ENCODE measurements at regions of chr19 and their contacts with region 1.

Region 1: DNA sequence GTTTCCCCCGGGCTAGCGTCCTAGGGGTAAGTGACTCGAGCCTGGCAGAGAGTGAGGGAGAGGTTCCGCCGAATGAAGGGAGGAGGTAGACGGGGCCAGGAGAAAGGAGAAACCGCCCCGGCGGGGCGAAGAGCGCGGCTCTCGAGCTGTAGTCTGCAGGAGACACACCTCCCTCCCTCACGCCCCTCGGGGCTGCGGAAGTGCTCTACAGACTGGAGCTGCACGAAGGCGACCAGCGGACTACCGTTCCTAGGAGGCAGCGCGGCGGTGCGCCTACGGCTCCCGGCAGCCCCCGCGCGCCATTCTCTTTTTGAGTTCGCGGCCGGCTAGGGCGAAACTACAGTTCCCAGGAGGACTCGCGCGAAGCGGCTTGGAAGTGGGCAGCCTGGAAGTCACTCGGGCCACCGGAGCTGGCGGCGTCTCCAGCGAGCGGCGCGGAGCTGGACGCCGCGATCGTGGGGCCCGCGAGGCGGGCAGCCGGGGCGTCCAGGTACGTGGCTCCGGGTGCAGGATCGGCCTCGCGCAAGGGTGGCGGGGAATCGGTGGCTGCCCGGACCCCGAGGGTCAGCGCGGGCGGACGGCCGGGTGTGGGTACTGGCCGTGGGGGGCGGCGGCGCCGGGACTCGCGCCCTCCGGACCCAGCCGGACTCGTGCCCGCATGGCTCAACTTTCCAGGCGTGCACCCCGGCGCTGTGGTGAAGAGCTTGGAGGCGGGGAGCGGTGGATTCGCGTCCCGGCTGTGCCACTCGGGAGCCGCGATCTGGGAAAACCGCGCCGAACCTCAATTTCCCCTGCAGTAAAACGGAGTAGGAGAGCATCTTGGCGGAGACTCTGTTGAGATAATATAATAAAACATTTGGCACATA is at the start of gene SIPA1L3:
- DNase-seq: peak; percentile 94
- ATAC-seq: peak; percentile 98 to 100 (median 99)
- H3K4me3 ChIP-seq: peak within 1 kb of the TSS; percentile 63 to 99 (median 88)
- H3K27ac ChIP-seq: peak within 1 kb of the TSS in 9 of 10 donors; percentile 64 to 88 (median 78)
- H3K4me1 ChIP-seq: peaks cover 4 to 24% (median 18%) of the 10 kb centered on the region in 9 donors
- H3K27me3 ChIP-seq: no peaks in the 10 kb centered on the region
- CTCF ChIP-seq: peak in 2 of 9 donors; percentile 9 to 16
- total RNA-seq, gene SIPA1L3: 5.2 to 24.2 (median 12.7) TPM

Region 2: GRCh38 chr19:38004521-38005223 is 97.6 kb after region 1 on chr19:
- intact Hi-C with region 1: loop called in 4 of 10 experiments (anchors 5 to 10 kb)
- DNase-seq: peak; percentile 64 to 90
- ATAC-seq: peak; percentile 95 to 98 (median 96)
- H3K4me3 ChIP-seq: peak overlapping the region; percentile 12 to 55 (median 46)
- H3K27ac ChIP-seq: peak overlapping the region; percentile 51 to 92 (median 81)
- H3K4me1 ChIP-seq: peaks cover 9 to 40% (median 29%) of the 10 kb centered on the region in 9 donors
- H3K27me3 ChIP-seq: no peaks in the 10 kb centered on the region
- CTCF ChIP-seq: no peak

Region 3: GRCh38 chr19:38013913-38014575 is 106.9 kb after region 1 on chr19:
- intact Hi-C with region 1: loop called in 3 of 10 experiments (anchors 10 kb)
- DNase-seq: no peak
- ATAC-seq: no peak
- H3K4me3 ChIP-seq: no peak overlapping the region
- H3K27ac ChIP-seq: no peak overlapping the region
- H3K4me1 ChIP-seq: no peaks in the 10 kb centered on the region
- H3K27me3 ChIP-seq: no peaks in the 10 kb centered on the region
- CTCF ChIP-seq: no peak

Region 4: GRCh38 chr19:38095411-38096308 is 188.6 kb after region 1 on chr19:
- intact Hi-C with region 1: loop called in 8 of 10 experiments (anchors 2 to 10 kb)
- DNase-seq: peak; percentile 59 to 68
- ATAC-seq: peak in 6 of 8 donors; percentile 50 to 76 (median 62)
- H3K4me3 ChIP-seq: no peak overlapping the region
- H3K27ac ChIP-seq: no peak overlapping the region
- H3K4me1 ChIP-seq: peaks cover 0 to 17% (median 0%) of the 10 kb centered on the region in 9 donors
- H3K27me3 ChIP-seq: no peaks in the 10 kb centered on the region
- CTCF ChIP-seq: peak; percentile 45 to 80 (median 71)

Region 5: GRCh38 chr19:38107129-38107528 is 200.0 kb after region 1 on chr19:
- intact Hi-C with region 1: no loop called
- DNase-seq: no peak
- ATAC-seq: no peak
- H3K4me3 ChIP-seq: no peak overlapping the region
- H3K27ac ChIP-seq: no peak overlapping the region
- H3K4me1 ChIP-seq: no peaks in the 10 kb centered on the region
- H3K27me3 ChIP-seq: no peaks in the 10 kb centered on the region
- CTCF ChIP-seq: no peak

Region 6: DNA sequence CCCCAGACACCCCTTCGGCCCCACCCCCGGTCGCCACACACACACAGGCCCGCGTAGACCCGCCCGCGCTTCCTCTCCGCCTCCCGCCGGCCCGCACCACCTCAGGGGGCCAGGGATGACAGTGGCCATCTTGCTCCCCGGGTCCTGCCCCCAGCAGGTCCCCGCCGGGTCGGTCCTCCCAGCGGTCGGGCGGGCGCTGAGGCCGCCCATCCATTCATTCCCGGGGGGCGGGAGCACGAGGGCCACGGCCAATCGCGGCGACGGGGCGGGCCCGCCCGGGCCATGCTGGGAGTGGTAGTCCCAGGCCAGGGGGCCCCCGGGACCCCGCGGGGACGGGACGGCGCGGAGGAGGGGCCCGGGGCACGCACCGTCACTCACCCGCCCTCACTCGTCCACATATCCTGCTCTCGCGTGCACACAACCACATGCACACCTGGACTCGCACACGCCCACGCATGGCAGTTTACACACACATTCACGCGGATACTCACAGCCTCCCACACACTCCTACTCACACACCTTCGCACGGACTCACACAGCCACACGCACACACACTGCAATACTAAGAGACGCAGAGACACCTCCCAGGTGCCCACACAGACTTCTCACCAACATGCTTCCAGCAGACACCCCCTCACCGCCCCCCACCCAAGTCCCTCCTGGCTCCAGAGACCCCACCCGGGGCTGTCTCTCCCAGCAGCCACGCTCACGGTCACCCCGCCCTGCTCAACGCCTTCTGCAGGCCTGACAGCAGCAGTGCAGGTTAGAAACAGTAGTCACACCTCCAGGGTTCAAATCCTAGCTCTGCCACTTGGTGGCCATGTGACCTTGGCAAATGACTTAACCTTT is 317.1 kb after region 1 on chr19 and contains the start of gene DPF1:
- intact Hi-C with region 1: loop called in 4 of 10 experiments (anchors 5 to 10 kb)
- DNase-seq: peak; percentile 35 to 50
- ATAC-seq: peak; percentile 48 to 84 (median 74)
- H3K4me3 ChIP-seq: peak within 1 kb of the TSS in 9 of 10 donors; percentile 29 to 55 (median 50)
- H3K27ac ChIP-seq: no peak within 1 kb of the TSS
- H3K4me1 ChIP-seq: peaks cover 3 to 27% (median 22%) of the 10 kb centered on the region in 9 donors
- H3K27me3 ChIP-seq: peaks cover 13 to 86% (median 81%) of the 10 kb centered on the region in 7 donors
- CTCF ChIP-seq: no peak
- total RNA-seq, gene DPF1: 0.16 to 0.72 (median 0.30) TPM in 6 of 10 donors, not detected in the others

Region 7: GRCh38 chr19:38229585-38230073 is 322.5 kb after region 1 on chr19:
- intact Hi-C with region 1: loop called in 6 of 10 experiments (anchors 5 to 10 kb)
- DNase-seq: peak; percentile 52 to 68
- ATAC-seq: peak; percentile 85 to 92 (median 86)
- H3K4me3 ChIP-seq: peak overlapping the region in 7 of 10 donors; percentile 21 to 42 (median 37)
- H3K27ac ChIP-seq: no peak overlapping the region
- H3K4me1 ChIP-seq: peaks cover 3 to 17% (median 13%) of the 10 kb centered on the region in 9 donors
- H3K27me3 ChIP-seq: peaks cover 0 to 79% (median 57%) of the 10 kb centered on the region in 7 donors
- CTCF ChIP-seq: peak in 1 of 9 donors; percentile 4

Region 8: DNA sequence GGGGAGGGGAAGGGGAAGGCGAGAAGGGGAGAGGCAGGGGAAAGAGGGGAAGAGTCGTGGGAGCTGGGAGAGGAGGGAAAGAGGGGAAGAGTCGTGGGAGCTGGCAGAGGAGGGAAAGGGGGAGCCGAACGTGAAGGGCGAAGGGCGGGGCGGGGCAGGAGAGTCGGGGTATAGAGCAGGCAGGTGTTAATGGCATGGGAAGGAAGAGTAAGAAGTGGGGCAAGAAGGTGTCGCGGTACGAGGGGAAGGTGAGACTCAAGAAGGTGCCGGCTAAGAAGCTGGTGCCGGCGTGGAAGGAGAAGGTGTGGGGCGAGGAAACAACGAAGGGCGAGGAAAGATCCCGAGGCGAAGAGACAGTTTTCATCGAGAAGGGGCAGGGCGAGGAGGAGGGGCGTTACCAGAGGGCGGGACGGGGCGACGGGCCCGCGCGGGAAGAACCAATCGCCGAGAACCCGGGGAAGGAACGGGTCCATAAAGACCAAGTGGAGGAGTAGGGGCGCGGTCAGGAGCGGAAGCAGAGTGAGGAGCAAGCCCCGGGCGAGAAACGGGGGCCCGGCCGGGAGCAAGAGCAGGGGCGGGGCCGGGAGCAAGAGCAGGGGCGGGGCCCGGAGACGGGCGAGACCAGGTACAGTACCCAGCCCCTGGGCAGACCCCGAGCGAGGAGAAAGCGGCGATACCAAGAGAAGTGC is 429.0 kb after region 1 on chr19:
- intact Hi-C with region 1: loop called in 4 of 10 experiments (anchors 5 to 10 kb)
- DNase-seq: peak; percentile 94 to 95
- ATAC-seq: peak; percentile 88 to 96 (median 94)
- H3K4me3 ChIP-seq: peak overlapping the region; percentile 12 to 87 (median 76)
- H3K27ac ChIP-seq: peak overlapping the region; percentile 83 to 95 (median 92)
- H3K4me1 ChIP-seq: peaks cover 0 to 12% (median 9%) of the 10 kb centered on the region in 9 donors
- H3K27me3 ChIP-seq: no peaks in the 10 kb centered on the region
- CTCF ChIP-seq: no peak

Measured in heart right ventricle (tissue), 16 donors.